ENCODE measurements at regions of chr13 and their contacts with region 1.

Region 1: DNA sequence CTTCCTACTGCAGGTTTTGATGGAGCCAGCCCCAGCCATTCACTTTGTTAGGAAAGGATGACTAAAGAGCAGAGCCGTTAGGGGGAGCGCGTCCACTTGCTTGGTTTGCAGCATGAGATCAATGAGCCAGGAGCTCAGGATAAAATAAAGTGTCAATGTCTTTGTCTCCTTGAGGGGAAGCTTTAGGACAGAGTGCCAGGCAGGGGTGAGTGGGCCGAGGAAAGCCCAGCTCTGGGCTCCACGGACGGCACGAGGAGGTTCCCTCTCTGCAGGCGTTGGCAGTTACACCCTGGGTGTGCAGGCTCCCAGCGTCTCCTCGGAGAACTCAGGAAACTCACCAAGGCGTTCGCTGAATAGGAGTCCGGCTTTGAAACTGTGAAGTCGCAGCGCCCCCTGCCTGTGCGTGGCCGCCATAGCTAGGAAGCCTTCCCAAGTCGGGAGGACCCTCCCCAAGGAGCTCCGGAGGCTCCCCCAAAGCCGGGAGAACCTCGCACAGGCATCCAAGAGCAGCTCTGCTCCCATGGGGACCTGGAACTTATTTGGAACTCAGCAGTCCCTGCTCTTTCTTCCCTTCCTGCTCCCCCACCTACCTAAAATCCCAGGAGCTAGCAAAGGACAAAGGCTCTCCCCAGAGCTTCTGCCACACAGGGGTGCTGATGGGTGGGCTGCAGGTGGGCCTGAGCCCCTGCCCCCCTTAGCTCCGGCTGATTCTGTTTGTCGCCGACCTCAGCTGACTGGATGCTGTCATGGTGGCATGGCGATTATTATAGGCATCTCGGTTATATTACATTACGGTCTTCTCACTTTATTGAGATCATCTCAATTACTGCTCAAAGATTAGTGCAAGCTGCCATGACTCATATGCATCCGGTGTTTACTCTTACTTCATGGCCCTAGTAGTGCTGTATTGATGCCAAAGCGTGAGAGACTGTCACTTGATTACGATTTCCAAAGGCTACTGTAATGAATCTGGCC is 34.4 kb downstream of the GSX1 start:
- DNase-seq: peak; percentile 72
- ATAC-seq: peak; percentile 70
- H3K4me3 Mint-ChIP-seq: no peak overlapping the region
- H3K27ac Mint-ChIP-seq: no peak overlapping the region
- H3K4me1 Mint-ChIP-seq: peaks cover 12% of the 10 kb centered on the region
- H3K27me3 Mint-ChIP-seq: peaks cover 58% of the 10 kb centered on the region

Region 2: DNA sequence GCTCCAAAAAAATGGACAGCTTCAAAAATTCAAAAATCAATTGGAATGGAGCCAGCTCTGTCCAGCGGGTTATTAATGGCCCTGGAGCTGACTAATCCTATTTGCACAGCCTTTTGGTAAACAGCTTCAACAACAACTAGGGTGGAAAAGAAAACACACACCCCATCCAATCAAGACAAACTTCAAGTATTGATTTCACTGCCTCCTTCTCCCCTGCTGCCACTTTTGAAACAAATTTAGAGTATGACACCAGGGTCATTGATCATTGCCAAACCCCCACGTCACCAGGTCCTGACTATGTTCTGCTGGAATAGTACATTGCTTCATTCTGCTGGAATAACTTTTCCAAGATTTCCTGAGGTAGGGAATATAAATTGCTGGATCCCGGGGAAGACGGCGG is 459.1 kb before region 1 on chr13:
- CTCF ChIA-PET with region 1: interaction called, 138 read pairs
- POLR2A ChIA-PET with region 1: no interaction called
- DNase-seq: no peak
- ATAC-seq: no peak
- H3K4me3 Mint-ChIP-seq: no peak overlapping the region
- H3K27ac Mint-ChIP-seq: no peak overlapping the region
- H3K4me1 Mint-ChIP-seq: peaks cover 6% of the 10 kb centered on the region
- H3K27me3 Mint-ChIP-seq: peaks cover 22% of the 10 kb centered on the region

Region 3: DNA sequence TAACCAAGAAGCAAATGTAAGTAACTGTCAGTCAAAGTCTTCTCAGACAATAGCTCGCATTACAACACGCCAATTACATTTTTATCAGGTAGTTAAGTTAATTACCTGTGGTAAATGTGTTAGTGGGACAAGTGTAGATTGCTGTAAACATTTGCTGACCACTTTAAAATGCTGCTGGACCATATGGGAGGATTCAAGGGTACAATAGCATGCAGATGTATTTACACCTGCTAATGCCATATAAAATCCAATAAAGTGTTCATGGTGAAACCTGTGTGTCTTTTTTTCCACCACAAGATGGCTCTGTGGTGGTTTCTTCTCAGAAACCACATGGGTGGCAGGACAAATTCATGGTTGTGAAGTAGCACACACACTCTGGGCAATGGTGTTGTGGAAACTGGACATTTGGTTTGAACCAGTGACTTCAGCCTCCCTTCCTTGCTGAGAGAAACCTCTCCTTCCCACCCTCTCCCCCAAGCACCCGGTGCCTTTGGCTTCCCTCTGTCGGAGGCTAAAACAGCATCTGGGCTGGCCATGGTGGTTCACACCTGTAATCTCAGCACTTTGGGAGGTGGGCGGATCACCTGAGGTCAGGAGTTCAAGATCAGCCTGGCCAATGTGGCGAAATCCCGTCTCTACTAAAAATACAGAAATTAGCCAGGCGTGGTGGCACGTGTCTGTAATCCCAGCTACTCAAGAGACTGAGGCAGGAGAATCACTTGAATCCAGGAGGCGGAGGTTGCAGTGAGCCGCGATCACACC is 420.3 kb before region 1 on chr13:
- CTCF ChIA-PET with region 1: interaction called, 10 read pairs
- POLR2A ChIA-PET with region 1: no interaction called
- DNase-seq: peak; percentile 51
- ATAC-seq: peak; percentile 64
- H3K4me3 Mint-ChIP-seq: no peak overlapping the region
- H3K27ac Mint-ChIP-seq: no peak overlapping the region
- H3K4me1 Mint-ChIP-seq: peaks cover 6% of the 10 kb centered on the region
- H3K27me3 Mint-ChIP-seq: peaks cover 32% of the 10 kb centered on the region

Region 4: GRCh38 chr13:27783111-27783510 is 43.6 kb before region 1 on chr13:
- CTCF ChIA-PET with region 1: interaction called, 13 read pairs
- POLR2A ChIA-PET with region 1: no interaction called
- DNase-seq: no peak
- ATAC-seq: no peak
- H3K4me3 Mint-ChIP-seq: no peak overlapping the region
- H3K27ac Mint-ChIP-seq: no peak overlapping the region
- H3K4me1 Mint-ChIP-seq: no peaks in the 10 kb centered on the region
- H3K27me3 Mint-ChIP-seq: peaks cover 46% of the 10 kb centered on the region

Region 5: GRCh38 chr13:27839809-27840467 is 13.3 kb after region 1 on chr13:
- CTCF ChIA-PET with region 1: interaction called, 21 read pairs
- POLR2A ChIA-PET with region 1: no interaction called
- DNase-seq: no peak
- ATAC-seq: no peak
- H3K4me3 Mint-ChIP-seq: no peak overlapping the region
- H3K27ac Mint-ChIP-seq: no peak overlapping the region
- H3K4me1 Mint-ChIP-seq: no peaks in the 10 kb centered on the region
- H3K27me3 Mint-ChIP-seq: peaks cover 35% of the 10 kb centered on the region

Region 6: GRCh38 chr13:27997904-27998522 is 171.3 kb after region 1 on chr13:
- CTCF ChIA-PET with region 1: interaction called, 15 read pairs
- POLR2A ChIA-PET with region 1: no interaction called
- DNase-seq: peak; percentile 55
- ATAC-seq: peak; percentile 73
- H3K4me3 Mint-ChIP-seq: no peak overlapping the region
- H3K27ac Mint-ChIP-seq: no peak overlapping the region
- H3K4me1 Mint-ChIP-seq: no peaks in the 10 kb centered on the region
- H3K27me3 Mint-ChIP-seq: no peaks in the 10 kb centered on the region

Region 7: GRCh38 chr13:28138012-28138755 is 311.5 kb after region 1 on chr13 and contains the start of gene PAN3:
- CTCF ChIA-PET with region 1: no interaction called
- POLR2A ChIA-PET with region 1: no interaction called
- DNase-seq: peak; percentile 93
- ATAC-seq: peak; percentile 68
- H3K4me3 Mint-ChIP-seq: peak within 1 kb of the TSS; percentile 97
- H3K27ac Mint-ChIP-seq: peak within 1 kb of the TSS; percentile 98
- H3K4me1 Mint-ChIP-seq: peaks cover 41% of the 10 kb centered on the region
- H3K27me3 Mint-ChIP-seq: no peaks in the 10 kb centered on the region
- total RNA-seq, gene PAN3: 40.2 to 42.2 TPM

Region 8: DNA sequence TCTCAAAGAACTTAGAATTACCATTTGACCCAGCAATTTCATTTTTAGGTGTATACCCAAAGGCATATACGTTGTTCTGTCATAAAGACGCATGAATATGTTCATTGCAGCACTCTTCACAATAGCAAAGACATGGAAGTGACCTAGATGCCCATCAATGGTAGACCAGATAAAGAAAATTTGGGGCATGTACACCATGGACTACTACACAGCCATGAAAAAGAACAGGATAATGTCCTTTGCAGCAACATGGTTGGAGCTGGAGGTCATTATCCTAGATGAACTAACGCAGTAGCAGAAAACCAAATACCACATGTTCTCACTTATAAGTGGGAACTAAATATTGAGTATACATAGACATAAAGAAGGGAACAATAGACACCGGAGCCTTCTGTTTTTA is 332.4 kb after region 1 on chr13:
- CTCF ChIA-PET with region 1: no interaction called
- POLR2A ChIA-PET with region 1: no interaction called
- DNase-seq: no peak
- ATAC-seq: no peak
- H3K4me3 Mint-ChIP-seq: no peak overlapping the region
- H3K27ac Mint-ChIP-seq: no peak overlapping the region
- H3K4me1 Mint-ChIP-seq: peaks cover 7% of the 10 kb centered on the region
- H3K27me3 Mint-ChIP-seq: no peaks in the 10 kb centered on the region